ENCODE measurements at regions of chr14 and their contacts with region 1.

Region 1: GRCh38 chr14:22388669-22389595 is 200.1 kb downstream of the DAD1 start:
- DNase-seq: no peak
- H3K4me3 ChIP-seq: no peak overlapping the region
- H3K27ac ChIP-seq: no peak overlapping the region
- H3K4me1 ChIP-seq: no peaks in the 10 kb centered on the region
- H3K27me3 ChIP-seq: no peaks in the 10 kb centered on the region
- CTCF ChIP-seq: no peak
- POLR2A ChIP-seq: no peak

Region 2: DNA sequence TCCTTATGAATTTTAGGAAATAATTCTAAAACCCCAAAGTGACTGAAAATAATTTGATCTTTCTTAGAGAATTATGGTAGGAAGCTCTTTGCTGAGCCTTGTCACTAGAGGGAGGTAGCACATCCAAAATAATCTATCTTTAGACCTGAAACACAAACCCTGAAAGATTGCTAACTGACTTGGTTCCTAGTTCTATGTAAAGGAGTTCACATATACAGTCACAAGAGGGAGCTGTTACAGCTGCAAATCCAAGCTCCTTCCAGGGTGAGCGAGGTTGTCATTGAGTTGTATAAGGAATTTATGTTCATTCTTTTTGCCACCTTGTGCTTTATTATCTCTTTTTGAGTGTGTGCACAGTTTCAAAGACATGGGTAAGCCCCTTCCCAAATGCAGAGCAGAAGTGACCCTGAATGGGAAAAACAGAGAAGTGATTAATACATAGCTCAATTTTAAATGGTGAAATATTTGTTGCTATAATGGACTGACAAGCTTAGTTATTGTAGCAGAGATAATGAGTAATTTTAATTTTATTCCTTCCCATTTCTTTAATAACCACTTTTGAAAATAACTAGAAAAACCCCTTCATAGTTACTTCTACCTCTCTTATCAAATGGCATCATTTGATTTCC is 187.8 kb before region 1 on chr14:
- intact Hi-C with region 1: no loop called
- DNase-seq: no peak
- H3K4me3 ChIP-seq: no peak overlapping the region
- H3K27ac ChIP-seq: no peak overlapping the region
- H3K4me1 ChIP-seq: no peaks in the 10 kb centered on the region
- H3K27me3 ChIP-seq: no peaks in the 10 kb centered on the region
- CTCF ChIP-seq: peak in 4 of 6 experiments; percentile 8 to 36 (median 22)
- POLR2A ChIP-seq: no peak

Region 3: GRCh38 chr14:22472935-22473854 is 84.3 kb after region 1 on chr14:
- intact Hi-C with region 1: loop called (anchors 2 kb)
- DNase-seq: peak; percentile 53 to 59
- H3K4me3 ChIP-seq: no peak overlapping the region
- H3K27ac ChIP-seq: no peak overlapping the region
- H3K4me1 ChIP-seq: peaks cover 0 to 11% of the 10 kb centered on the region in 2 donors
- H3K27me3 ChIP-seq: no peaks in the 10 kb centered on the region
- CTCF ChIP-seq: peak in 5 of 6 experiments; percentile 39 to 78 (median 66)
- POLR2A ChIP-seq: no peak

Measured in thyroid gland (tissue), 4 donors.